ENCODE measurements at regions of chr9 and their contacts with region 1.

Region 1: DNA sequence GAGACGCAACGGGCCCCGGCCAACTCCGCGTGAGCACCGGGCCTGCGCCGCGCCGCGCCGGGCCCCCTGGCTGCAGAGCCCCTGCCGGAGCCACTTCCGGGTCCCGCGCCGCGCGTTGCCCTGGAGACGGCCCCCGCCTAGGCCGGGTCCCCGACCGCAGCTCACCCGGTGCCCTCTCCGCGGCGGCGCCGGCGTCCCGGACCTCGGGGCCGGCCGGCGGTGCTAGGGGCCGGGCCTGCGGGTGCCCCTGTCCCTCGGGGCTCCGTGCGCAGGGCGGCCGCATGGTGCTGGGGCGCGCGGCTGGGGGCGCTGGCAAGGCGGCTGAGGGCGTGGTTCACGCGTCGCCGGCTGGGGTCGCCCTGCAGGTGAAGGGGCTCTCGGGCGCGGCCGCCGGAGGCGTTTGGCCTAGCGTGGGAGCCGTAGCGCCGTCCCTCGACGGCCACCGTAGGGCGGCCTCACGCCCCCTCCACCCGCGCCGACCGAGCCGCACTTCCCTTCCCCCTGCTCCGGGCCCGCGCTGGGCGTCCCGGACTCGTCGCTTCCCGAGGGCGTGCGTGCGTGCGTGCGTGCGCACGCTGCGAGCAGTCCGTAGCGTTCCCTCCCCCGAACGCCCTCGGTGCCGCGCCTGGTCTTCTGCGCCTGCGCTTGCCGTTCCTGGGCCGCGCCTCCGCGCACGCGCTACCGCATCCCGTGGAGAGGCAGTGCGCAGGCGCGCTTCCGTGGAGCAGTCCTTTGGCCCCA is at the start of gene TMEM250:
- DNase-seq: peak; percentile 80 to 93 (median 90)
- H3K4me3 ChIP-seq: peak within 1 kb of the TSS; percentile 62 to 97 (median 88)
- H3K27ac ChIP-seq: peak within 1 kb of the TSS; percentile 68 to 98 (median 94)
- H3K27me3 ChIP-seq: no peaks in the 10 kb centered on the region
- CTCF ChIP-seq: peak in 24 of 56 donors; percentile 6 to 53 (median 24)
- total RNA-seq, gene TMEM250: 19.3 to 53.2 (median 34.1) TPM

Region 2: GRCh38 chr9:135602789-135603481 is 515.6 kb before region 1 on chr9:
- intact Hi-C with region 1: loop called in 1 of 2 experiments (anchors 5 kb)
- DNase-seq: peak in 7 of 10 donors; percentile 18 to 43 (median 40)
- H3K4me3 ChIP-seq: no peak overlapping the region
- H3K27ac ChIP-seq: no peak overlapping the region
- H3K27me3 ChIP-seq: peaks cover 0 to 7% (median 0%) of the 10 kb centered on the region in 45 donors
- CTCF ChIP-seq: peak; percentile 56 to 85 (median 72)

Region 3: DNA sequence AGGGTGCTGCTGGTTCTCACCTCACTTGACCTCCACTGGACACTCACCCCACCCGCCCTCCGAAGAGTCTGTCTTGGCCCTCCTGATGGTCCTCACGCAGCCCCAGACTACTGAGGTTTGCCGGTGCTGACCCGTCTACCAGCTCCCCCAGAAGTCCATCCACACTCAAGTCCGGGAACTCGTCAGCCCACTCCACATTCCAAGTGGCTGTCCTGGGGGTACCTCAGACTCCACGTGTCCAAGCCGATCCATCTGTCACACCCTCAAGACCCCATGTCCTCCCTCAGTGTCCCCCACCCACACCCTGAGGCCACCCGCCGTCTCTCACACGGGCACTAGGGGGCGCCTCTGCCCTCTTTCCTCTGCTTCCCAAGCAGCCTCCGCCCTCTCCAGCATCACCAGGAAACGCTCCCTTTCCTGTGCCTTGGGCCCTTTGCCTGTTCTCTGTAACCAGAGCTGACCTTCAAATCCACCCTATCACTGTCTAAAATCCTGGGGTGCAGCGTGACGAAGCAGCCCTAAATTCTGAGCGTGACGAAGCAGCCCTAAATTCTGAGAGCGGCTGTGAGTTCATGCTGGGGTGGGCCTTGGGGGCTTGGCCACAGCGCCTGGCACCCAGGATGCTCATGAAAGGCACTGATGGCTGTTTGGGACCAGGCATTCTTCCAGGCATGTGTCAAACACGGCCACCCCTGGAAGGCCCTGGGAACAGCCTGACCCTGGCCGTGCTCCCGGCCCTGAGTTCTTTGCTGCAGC is 320.8 kb before region 1 on chr9:
- intact Hi-C with region 1: loop called (anchors 5 to 10 kb)
- DNase-seq: peak in 6 of 10 donors; percentile 42 to 60 (median 52)
- H3K4me3 ChIP-seq: no peak overlapping the region
- H3K27ac ChIP-seq: no peak overlapping the region
- H3K27me3 ChIP-seq: no peaks in the 10 kb centered on the region
- CTCF ChIP-seq: peak; percentile 21 to 77 (median 62)

Region 4: GRCh38 chr9:135939351-135940265 is 178.9 kb before region 1 on chr9:
- intact Hi-C with region 1: no loop called
- DNase-seq: no peak
- H3K4me3 ChIP-seq: no peak overlapping the region
- H3K27ac ChIP-seq: no peak overlapping the region
- H3K27me3 ChIP-seq: no peaks in the 10 kb centered on the region
- CTCF ChIP-seq: no peak

Region 5: DNA sequence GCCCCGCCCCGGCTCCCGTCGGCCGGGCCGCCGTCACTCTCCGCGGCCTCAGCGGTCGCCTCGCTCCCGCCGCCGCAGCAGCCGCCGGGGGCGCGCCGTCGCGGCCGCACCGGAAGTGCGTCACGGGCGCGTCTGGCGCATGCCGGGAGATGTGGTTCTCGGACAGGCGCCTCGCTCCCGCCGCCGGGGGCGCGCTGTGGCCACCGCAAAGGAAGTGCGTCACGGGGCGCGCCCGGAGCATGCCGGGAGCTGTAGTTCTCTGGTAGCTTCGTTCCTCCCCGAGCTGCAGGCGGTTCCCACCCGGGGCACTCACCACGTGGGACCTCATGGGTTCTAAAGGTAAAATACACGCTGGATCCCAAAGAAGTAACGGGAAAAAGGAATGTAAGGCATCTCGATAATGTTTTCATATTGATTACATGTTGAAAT is 157.2 kb before region 1 on chr9 and contains the start of gene UBAC1:
- intact Hi-C with region 1: loop called in 1 of 2 experiments (anchors 2 kb)
- DNase-seq: peak; percentile 94 to 98 (median 96)
- H3K4me3 ChIP-seq: peak within 1 kb of the TSS; percentile 59 to 99 (median 90)
- H3K27ac ChIP-seq: peak within 1 kb of the TSS in 55 of 59 donors; percentile 10 to 94 (median 81)
- H3K27me3 ChIP-seq: no peaks in the 10 kb centered on the region
- CTCF ChIP-seq: peak in 54 of 56 donors; percentile 26 to 71 (median 56)
- total RNA-seq, gene UBAC1: 42.5 to 80.5 (median 55.0) TPM

Region 6: DNA sequence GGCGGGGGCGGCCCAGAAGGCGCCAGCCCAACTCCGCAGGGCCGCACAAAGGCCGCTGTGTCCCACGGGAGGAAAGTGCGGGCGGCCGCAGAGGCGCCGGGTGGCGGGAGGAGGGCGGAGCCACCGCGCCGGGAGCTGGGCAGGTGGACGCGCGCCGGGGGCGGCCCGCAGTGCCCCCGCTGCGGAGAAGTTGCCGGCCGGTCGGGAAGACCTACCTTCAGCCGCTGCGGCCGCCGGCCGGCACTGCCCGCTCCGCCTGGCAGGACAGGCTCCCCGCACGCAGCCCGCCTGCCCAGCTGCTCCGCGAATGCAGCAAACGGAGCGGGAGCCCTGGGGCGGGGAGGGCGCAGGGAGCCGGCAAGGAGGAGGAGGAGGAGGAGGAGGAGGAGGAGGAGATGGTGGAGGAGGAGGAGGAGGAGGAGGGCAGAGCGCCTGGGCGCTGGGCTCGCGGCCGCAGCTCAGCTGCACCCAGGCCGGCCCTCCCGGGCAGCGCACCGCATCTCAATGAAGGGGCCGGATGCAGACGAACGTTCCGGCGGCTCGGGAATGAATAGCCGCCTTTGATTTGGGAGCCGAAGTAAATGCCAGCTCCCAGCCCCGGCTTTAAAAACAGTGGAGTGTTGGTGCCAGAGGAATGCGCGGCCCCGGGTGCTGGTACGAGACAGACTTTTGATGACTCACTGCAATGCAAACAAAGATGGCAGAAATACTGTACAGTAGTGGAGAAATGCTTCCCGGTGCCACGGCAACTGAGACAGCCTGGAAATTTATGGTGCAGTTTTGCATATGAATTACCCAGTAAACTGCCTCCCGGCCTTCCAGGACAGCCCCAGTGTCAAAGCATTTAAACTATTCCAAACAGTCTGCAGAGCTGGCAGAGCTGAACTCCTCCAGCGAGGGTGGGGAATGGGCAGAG is 66.7 kb before region 1 on chr9:
- intact Hi-C with region 1: loop called (anchors 2 to 5 kb)
- DNase-seq: peak; percentile 65 to 93 (median 90)
- H3K4me3 ChIP-seq: peak overlapping the region; percentile 50 to 82 (median 72)
- H3K27ac ChIP-seq: peak overlapping the region; percentile 68 to 99 (median 97)
- H3K27me3 ChIP-seq: no peaks in the 10 kb centered on the region
- CTCF ChIP-seq: peak in 3 of 56 donors; percentile 1 to 26 (median 5)

Region 7: GRCh38 chr9:136196441-136197371 is 78.2 kb after region 1 on chr9:
- intact Hi-C with region 1: no loop called
- DNase-seq: no peak
- H3K4me3 ChIP-seq: no peak overlapping the region
- H3K27ac ChIP-seq: no peak overlapping the region
- H3K27me3 ChIP-seq: peaks cover 12 to 100% (median 98%) of the 10 kb centered on the region in 45 donors
- CTCF ChIP-seq: no peak

Measured in dorsolateral prefrontal cortex (tissue), 120 donors.